Posterior vena cava (tissue), 2 donors: ENCODE measurements at regions of chr5 and their contacts with region 1.

Region 1: DNA sequence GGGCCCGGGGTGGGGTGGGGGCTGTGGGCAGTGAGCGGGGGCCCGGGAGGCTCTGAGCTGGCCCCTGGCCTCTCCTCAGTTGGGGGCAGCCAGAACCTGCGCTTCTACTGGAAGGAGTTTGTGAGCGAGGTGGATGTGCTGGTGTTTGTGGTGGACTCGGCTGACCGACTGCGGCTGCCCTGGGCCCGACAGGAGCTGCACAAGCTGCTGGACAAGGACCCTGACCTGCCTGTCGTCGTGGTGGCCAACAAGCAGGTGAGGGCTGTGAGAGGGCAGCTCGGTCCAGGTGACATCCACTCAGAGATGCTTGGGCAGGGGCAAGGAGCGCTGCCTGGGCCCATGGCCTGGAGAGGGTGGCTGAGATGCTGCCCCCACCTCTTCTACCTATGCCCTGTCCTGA is 3.4 kb downstream of the ARL10 start:
- DNase-seq: no peak

Region 2: GRCh38 chr5:176319827-176320554 is 48.7 kb before region 1 on chr5:
- intact Hi-C with region 1: no loop called
- DNase-seq: no peak

Region 3: GRCh38 chr5:176334031-176334770 is 34.5 kb before region 1 on chr5:
- intact Hi-C with region 1: loop called in 1 of 2 experiments (anchors 1 kb)
- DNase-seq: no peak